Right ventricle myocardium superior (tissue), 1 donor: ENCODE measurements at regions of chr10 and their contacts with region 1.

Region 1: DNA sequence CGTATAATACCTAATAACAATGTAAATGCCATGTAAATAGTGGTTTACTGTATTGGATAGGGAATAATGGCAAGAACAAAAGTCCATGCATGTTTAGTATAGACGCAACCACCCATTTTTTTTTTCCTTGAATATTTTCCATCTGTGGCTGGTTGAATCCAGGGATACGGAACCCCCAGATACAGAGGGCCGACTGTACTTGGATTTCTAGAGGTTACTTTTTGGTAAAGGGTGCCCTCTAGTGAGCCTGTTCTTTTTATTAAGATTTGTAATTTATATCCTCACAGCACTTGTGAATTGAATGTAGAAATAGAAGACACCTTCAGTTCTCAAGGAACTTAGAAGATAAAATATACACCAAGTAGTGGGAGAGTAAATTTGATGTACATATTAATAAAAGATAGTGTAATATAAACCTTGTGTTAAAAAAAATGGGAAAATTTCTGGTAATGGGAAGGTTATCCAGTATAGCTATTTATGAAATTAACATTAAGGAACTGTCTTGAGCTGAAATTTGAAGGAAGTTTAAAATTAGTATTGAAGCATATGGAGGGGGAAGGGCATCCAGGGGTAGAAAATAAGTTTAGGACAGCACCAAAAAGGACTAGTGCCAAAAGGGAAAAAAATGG is 32.0 kb downstream of the EXOC6 start:
- DNase-seq: no peak
- ATAC-seq: peak; percentile 59

Region 2: GRCh38 chr10:92517034-92517655 is 363.2 kb before region 1 on chr10:
- intact Hi-C with region 1: loop called (anchors 5 kb)
- DNase-seq: no peak
- ATAC-seq: peak; percentile 87

Region 3: DNA sequence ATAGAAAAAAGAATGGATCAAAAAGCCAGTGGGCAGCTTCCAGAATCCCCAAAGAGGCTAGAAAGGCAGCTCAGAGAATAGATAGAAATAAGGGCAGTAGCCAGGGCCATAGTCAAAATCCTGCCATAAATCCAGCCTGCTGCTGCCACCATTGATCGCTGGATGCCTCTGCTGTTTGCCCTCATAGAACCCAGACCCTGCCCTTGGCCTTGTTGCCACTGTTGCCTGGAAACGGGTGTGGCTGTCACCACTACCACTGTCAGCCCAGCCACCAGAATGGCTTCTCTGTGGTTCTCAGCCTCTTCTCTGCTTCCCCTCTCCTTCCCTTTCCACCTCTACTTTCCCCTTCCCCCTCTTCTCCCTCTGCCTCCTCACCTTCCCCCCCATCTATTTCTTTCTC is 132.7 kb before region 1 on chr10:
- intact Hi-C with region 1: no loop called
- DNase-seq: peak; percentile 52
- ATAC-seq: peak; percentile 49

Region 4: GRCh38 chr10:93288654-93289634 is 408.6 kb after region 1 on chr10:
- intact Hi-C with region 1: loop called (anchors 10 kb)
- DNase-seq: peak; percentile 64
- ATAC-seq: peak; percentile 72

Region 5: GRCh38 chr10:93515071-93516005 is 635.0 kb after region 1 on chr10:
- intact Hi-C with region 1: loop called (anchors 10 kb)
- DNase-seq: no peak
- ATAC-seq: peak; percentile 75